H1 (cell line): ENCODE measurements at regions of chr16 and their contacts with region 1.

Region 1: GRCh38 chr16:19696328-19696727 is 21.7 kb downstream of the KNOP1 start:
- DNase-seq: no peak
- H3K4me3 ChIP-seq: no peak overlapping the region
- H3K27ac ChIP-seq: no peak overlapping the region
- H3K4me1 ChIP-seq: no peaks in the 10 kb centered on the region
- H3K27me3 ChIP-seq: no peaks in the 10 kb centered on the region
- CTCF ChIP-seq: no peak
- EP300 ChIP-seq: no peak
- POLR2A ChIP-seq: no peak
- RAD21 ChIP-seq: no peak

Region 2: DNA sequence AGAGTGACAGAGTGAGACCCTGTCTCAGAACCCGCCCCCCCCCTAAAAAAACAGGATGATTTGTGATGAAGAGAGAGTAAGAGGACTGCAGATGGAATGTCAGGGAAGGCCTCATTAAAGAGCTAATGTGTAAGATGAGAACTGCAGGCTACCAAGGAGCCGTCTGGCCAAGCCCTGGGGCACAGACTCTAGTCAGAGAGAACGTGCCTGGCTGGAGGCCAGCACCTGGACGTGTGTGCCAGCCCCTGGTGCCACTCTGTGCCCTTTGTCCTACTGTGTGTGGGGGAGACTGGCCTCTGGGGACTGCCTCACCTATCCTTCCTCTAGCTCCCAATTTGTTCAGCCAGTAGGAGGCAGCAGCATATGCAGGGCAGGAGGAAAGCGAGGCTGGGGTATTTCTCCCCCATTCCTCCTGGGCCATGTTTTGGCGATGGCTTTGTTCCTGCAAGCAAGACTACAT is 15.4 kb before region 1 on chr16:
- CTCF ChIA-PET with region 1: interaction called, 5 read pairs
- POLR2A ChIA-PET with region 1: interaction called, 12 read pairs
- DNase-seq: peak in 1 of 2 experiments; percentile 61
- H3K4me3 ChIP-seq: no peak overlapping the region
- H3K27ac ChIP-seq: no peak overlapping the region
- H3K4me1 ChIP-seq: no peaks in the 10 kb centered on the region
- H3K27me3 ChIP-seq: no peaks in the 10 kb centered on the region
- CTCF ChIP-seq: peak; percentile 64 to 76 (median 70)
- EP300 ChIP-seq: no peak
- POLR2A ChIP-seq: no peak
- RAD21 ChIP-seq: peak; percentile 66 to 69

Region 3: DNA sequence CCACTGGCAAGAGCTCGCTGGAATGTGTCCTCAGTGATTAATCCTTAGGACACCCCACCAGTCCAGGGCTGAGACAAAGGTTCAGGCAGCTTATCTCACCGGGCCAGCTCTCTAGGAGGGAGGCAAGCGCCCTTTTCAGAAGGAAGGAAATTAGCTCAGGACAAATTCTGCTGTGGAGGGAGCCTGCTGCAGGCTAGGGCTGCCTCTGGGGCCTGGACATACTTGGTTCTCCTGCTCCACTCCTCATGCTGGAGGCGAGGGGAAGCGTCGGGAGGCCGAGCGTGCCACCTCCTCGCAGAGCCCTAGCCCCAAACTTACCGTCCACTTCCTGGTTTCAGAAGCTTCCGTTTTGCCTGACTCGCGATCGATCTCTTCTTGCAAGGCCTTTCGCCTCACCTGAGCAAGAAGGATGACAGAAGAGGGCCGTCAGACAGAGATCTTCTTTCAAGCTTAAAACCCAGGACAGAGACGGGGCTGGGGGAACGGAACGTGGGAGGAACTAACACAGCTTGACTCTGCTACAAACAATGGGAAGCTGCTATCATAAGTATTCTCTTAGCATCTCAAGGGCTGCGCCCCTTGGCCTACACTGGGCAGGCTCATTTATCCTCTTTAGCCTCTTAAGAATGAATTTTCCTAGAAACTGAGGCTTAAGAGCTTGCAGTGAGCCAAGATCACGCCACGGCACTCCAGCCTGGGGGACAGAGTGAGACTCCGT is 14.0 kb after region 1 on chr16:
- CTCF ChIA-PET with region 1: interaction called, 3 read pairs
- POLR2A ChIA-PET with region 1: interaction called, 20 read pairs
- DNase-seq: no peak
- H3K4me3 ChIP-seq: no peak overlapping the region
- H3K27ac ChIP-seq: peak overlapping the region; percentile 48; the same call in 1 of the 2 replicates
- H3K4me1 ChIP-seq: peaks cover 12 to 50% (median 37%) of the 10 kb centered on the region in 4 experiments
- H3K27me3 ChIP-seq: no peaks in the 10 kb centered on the region
- CTCF ChIP-seq: no peak
- EP300 ChIP-seq: no peak
- POLR2A ChIP-seq: no peak
- RAD21 ChIP-seq: no peak